CD4-positive, alpha-beta memory T cell (primary cell): ENCODE measurements at regions of chr17 and their contacts with region 1.

Region 1: DNA sequence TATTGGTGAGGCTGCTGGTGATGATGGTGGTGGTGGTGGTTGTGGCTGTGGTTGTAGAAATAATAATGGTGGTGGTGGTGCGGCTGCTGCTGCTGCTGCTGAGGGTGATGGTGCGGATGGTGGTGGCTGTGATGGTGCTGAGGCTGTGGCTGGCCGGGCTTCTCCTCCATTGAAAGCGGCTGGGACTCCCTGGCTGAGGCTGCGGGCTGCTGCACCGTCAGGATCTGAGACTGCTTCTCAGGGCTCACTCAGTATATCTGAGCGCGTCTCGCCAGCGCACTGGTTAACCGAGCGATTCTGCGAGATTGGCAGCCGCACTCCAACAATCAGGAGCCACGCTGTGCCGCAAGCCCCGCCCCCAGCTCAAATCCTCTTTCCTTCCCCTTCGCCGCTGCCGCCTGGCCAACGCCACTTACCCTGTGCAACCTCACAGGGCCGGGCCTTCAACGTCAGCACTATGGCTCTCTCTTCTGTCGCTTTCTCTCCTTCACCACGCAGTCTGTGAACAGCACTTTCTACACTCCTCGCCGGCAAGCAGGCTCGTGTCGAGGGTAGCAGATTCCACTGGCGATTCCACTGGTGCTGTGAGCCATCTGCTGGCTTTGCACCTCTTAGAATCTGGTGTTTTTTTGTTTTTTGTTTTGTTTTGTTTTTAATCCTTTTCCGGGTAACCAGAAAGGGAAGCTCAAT is at the start of gene NUFIP2:
- DNase-seq: peak; percentile 95 to 99 (median 98)
- H3K4me3 ChIP-seq: peak within 1 kb of the TSS; percentile 77 to 79
- H3K4me3 Mint-ChIP-seq: peak within 1 kb of the TSS; percentile 99 to 100 (median 100)
- H3K27ac ChIP-seq: peak within 1 kb of the TSS; percentile 77
- H3K27ac Mint-ChIP-seq: peak within 1 kb of the TSS; percentile 98 to 100 (median 99)
- H3K4me1 ChIP-seq: peaks cover 41% of the 10 kb centered on the region
- H3K4me1 Mint-ChIP-seq: peaks cover 20 to 51% (median 34%) of the 10 kb centered on the region in 4 donors
- H3K27me3 ChIP-seq: no peaks in the 10 kb centered on the region
- H3K27me3 Mint-ChIP-seq: no peaks in the 10 kb centered on the region
- total RNA-seq, gene NUFIP2: 77.5 to 85.1 TPM

Region 2: GRCh38 chr17:29124117-29124924 is 169.7 kb before region 1 on chr17:
- CTCF ChIA-PET with region 1: interaction called, 11 read pairs
- POLR2A ChIA-PET with region 1: interaction called, 3 read pairs
- intact Hi-C with region 1: no loop called
- DNase-seq: peak; percentile 37 to 60 (median 42)
- H3K4me3 ChIP-seq: no peak overlapping the region
- H3K4me3 Mint-ChIP-seq: no peak overlapping the region
- H3K27ac ChIP-seq: no peak overlapping the region
- H3K27ac Mint-ChIP-seq: no peak overlapping the region
- H3K4me1 ChIP-seq: peaks cover 7% of the 10 kb centered on the region
- H3K4me1 Mint-ChIP-seq: peaks cover 6 to 12% (median 7%) of the 10 kb centered on the region in 4 donors
- H3K27me3 ChIP-seq: no peaks in the 10 kb centered on the region
- H3K27me3 Mint-ChIP-seq: no peaks in the 10 kb centered on the region

Region 3: GRCh38 chr17:29148790-29149430 is 145.1 kb before region 1 on chr17:
- CTCF ChIA-PET with region 1: interaction called, 17 read pairs
- POLR2A ChIA-PET with region 1: interaction called, 11 read pairs
- intact Hi-C with region 1: loop called (anchors 1 kb)
- DNase-seq: peak; percentile 88 to 91 (median 89)
- H3K4me3 ChIP-seq: peak overlapping the region; percentile 41 to 42
- H3K4me3 Mint-ChIP-seq: peak overlapping the region; percentile 68 to 84 (median 75)
- H3K27ac ChIP-seq: peak overlapping the region; percentile 53
- H3K27ac Mint-ChIP-seq: peak overlapping the region; percentile 66 to 92 (median 90)
- H3K4me1 ChIP-seq: peaks cover 27% of the 10 kb centered on the region
- H3K4me1 Mint-ChIP-seq: peaks cover 23 to 62% (median 33%) of the 10 kb centered on the region in 4 donors
- H3K27me3 ChIP-seq: no peaks in the 10 kb centered on the region
- H3K27me3 Mint-ChIP-seq: no peaks in the 10 kb centered on the region

Region 4: DNA sequence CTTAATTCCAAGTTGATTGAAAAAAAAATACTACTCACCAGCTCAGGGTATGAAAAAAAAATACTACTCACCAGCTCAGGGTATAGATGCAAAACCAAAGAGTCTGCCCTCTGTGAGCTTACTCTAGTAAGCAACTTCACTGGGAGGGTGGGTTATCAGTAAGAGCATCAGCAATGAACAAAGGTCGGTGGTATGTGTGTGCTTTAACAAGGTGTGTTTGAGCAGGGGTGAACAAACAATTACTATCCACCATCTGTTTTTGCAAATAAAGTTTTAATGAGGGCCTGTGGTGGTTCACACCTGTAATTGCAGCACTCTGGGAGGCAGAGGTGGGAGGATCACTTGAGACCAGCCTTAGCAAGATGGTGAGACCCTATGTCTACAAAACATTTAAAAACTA is 20.1 kb before region 1 on chr17:
- CTCF ChIA-PET with region 1: interaction called, 17 read pairs
- POLR2A ChIA-PET with region 1: interaction called, 19 read pairs
- intact Hi-C with region 1: no loop called
- DNase-seq: no peak
- H3K4me3 ChIP-seq: no peak overlapping the region
- H3K4me3 Mint-ChIP-seq: peak overlapping the region in 1 of 8 donors; percentile 55
- H3K27ac ChIP-seq: no peak overlapping the region
- H3K27ac Mint-ChIP-seq: peak overlapping the region; percentile 45 to 79 (median 65)
- H3K4me1 ChIP-seq: peaks cover 62% of the 10 kb centered on the region
- H3K4me1 Mint-ChIP-seq: peaks cover 36 to 83% (median 51%) of the 10 kb centered on the region in 4 donors
- H3K27me3 ChIP-seq: no peaks in the 10 kb centered on the region
- H3K27me3 Mint-ChIP-seq: no peaks in the 10 kb centered on the region

Region 5: DNA sequence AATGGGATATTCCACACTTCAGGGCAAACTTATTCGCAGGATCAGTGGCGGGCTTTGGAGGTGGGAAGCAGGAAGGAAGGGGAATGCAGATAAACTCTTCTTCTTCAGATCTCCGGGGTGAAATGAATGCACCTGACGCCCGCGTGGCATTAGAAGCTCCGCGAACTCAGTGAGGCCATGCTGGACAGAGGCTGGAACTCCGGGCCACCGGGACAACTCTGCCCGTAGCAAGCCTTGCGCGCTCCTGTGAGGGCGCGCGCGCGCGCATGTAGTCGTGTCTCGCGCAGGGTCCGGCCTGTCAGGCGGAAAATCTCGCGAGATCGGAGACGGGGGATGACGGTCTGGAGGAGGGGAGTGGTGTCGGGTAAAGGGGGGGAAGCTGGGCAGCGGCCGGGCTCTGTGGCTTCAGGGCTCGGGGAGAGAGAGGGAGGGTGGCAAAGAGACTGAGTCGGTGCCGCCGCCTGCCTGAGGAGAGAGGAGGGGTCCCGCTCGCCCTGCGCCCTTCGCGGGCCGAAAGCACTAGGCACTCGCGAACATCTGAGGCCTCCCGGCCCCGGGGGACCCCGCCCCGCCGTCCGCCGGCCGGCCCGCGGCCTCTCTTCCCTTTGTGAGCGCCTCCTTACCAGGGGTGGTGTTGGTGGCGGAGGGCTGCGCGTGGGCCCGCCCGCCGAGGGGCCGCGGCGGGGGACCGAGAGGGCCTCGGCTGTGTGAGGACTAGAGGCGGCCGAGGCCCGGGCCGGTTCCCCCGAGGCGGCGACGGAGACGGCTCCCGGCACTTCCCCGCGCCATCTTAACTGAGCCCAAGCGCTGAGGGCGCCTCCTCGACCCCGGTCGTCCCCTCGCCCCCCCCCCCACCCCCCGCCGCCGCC is 96.2 kb after region 1 on chr17 and contains the start of gene TAOK1:
- CTCF ChIA-PET with region 1: no interaction called
- POLR2A ChIA-PET with region 1: interaction called, 4 read pairs
- intact Hi-C with region 1: loop called (anchors 1 kb)
- DNase-seq: peak; percentile 96 to 98 (median 97)
- H3K4me3 ChIP-seq: peak within 1 kb of the TSS; percentile 89 to 98
- H3K4me3 Mint-ChIP-seq: peak within 1 kb of the TSS; percentile 94 to 99 (median 96)
- H3K27ac ChIP-seq: peak within 1 kb of the TSS; percentile 93
- H3K27ac Mint-ChIP-seq: peak within 1 kb of the TSS; percentile 94 to 98 (median 97)
- H3K4me1 ChIP-seq: peaks cover 45% of the 10 kb centered on the region
- H3K4me1 Mint-ChIP-seq: peaks cover 31 to 50% (median 40%) of the 10 kb centered on the region in 4 donors
- H3K27me3 ChIP-seq: no peaks in the 10 kb centered on the region
- H3K27me3 Mint-ChIP-seq: no peaks in the 10 kb centered on the region
- total RNA-seq, gene TAOK1: 71.2 to 72.0 TPM